ENCODE measurements at regions of chr15 and their contacts with region 1.

Region 1: DNA sequence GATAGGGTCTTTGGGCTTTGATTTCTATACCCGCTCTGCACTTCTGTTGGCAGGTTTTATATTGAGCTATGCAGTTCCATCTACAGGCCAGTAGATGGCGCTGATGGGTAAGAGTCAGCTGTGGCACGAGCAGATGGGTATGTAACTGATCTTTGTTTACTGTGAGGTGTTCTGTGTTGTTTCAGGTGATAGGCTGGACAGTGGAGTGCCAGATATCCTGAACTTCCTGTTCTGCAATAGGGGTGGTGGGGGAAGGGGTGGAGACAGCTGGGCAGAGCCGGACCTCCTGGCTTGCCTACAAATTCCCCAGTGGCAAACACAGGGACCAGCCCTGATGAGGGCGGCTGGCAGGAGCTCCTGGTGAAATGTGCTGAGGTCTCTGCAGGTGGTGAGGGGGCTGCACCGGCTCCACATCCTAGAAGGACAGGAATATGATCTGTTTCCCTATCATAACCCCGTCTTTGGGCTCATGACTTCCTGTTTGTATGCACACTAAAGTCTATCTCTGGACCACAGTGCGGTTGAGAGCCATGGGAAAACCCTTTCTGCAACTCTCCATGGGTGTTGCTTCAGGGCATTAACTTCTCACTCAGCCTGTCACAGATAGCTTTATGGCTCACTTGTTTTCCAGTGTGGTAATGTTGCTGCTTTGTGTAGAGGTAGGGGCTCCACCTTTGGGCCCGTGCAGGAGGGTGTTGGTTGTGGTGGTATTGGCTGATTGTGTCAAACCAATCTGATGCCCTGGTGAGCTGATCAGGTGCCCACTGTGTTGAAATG is 13.4 kb upstream of the FAM98B start:
- DNase-seq: peak; percentile 62
- ATAC-seq: peak; percentile 96
- H3K4me3 ChIP-seq: no peak overlapping the region
- H3K27ac ChIP-seq: no peak overlapping the region
- H3K4me1 ChIP-seq: no peaks in the 10 kb centered on the region
- H3K27me3 ChIP-seq: peaks cover 25% of the 10 kb centered on the region
- CTCF ChIP-seq: peak; percentile 89
- POLR2A ChIP-seq: no peak
- RAD21 ChIP-seq: peak; percentile 88

Region 2: GRCh38 chr15:38547255-38547997 is 106.9 kb after region 1 on chr15:
- CTCF ChIA-PET with region 1: interaction called, 3 read pairs
- POLR2A ChIA-PET with region 1: no interaction called
- dilution Hi-C with region 1: no loop called
- in situ Hi-C with region 1: no loop called
- intact Hi-C with region 1: loop called (anchors 1 kb)
- DNase-seq: peak; percentile 70
- ATAC-seq: no peak
- H3K4me3 ChIP-seq: no peak overlapping the region
- H3K27ac ChIP-seq: no peak overlapping the region
- H3K4me1 ChIP-seq: peaks cover 4% of the 10 kb centered on the region; the same call in 1 of the 2 replicates
- H3K27me3 ChIP-seq: no peaks in the 10 kb centered on the region
- CTCF ChIP-seq: no peak
- POLR2A ChIP-seq: no peak
- RAD21 ChIP-seq: no peak

Region 3: GRCh38 chr15:38631126-38632075 is 190.9 kb after region 1 on chr15:
- CTCF ChIA-PET with region 1: no interaction called
- POLR2A ChIA-PET with region 1: no interaction called
- dilution Hi-C with region 1: no loop called
- in situ Hi-C with region 1: no loop called
- intact Hi-C with region 1: no loop called
- DNase-seq: no peak
- ATAC-seq: no peak
- H3K4me3 ChIP-seq: no peak overlapping the region
- H3K27ac ChIP-seq: no peak overlapping the region
- H3K4me1 ChIP-seq: no peaks in the 10 kb centered on the region
- H3K27me3 ChIP-seq: peaks cover 58% of the 10 kb centered on the region
- CTCF ChIP-seq: no peak
- POLR2A ChIP-seq: no peak
- RAD21 ChIP-seq: no peak

Region 4: DNA sequence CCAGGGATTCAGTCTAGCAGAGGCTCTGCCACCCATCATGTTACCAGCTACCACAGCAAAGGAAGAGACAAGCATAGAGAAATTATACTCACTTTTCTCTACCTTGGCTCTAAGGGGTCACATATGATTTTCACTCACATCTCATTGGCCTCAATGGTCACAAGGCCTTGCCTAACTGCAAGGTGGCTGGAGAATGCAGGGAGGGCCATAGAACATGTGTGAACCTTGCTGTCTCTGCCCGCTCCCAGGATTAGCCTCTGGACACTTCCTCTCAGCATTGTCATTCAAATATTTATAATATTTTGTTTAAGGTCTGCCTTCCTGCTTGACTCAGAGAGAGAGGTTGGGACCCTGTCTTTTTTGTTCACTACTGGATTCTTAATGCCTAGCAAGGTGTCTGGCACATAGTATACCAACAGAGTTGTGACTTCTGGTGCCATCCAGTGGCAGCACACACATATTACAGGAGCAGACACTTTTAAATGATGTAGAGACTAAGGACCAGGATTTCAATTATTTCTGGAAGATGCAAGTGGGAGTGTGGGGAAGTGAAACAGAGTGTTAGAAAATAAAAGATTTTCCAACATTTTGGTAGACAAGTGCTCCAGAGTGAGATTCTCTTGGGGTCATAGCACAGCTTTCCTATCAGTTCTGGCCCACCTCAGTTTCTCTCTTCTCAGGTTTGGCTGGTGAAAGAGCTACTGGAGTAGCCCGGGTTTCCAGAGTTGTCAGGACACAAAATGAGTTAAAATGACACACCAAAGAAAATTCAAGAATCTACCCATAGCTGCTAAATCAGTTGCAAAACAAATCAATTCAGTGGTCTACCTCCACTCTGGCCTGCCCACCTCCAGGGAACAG is 243.1 kb after region 1 on chr15:
- CTCF ChIA-PET with region 1: interaction called, 25 read pairs
- POLR2A ChIA-PET with region 1: no interaction called
- dilution Hi-C with region 1: no loop called
- in situ Hi-C with region 1: loop called (anchors 25 kb)
- intact Hi-C with region 1: loop called (anchors 1 kb)
- DNase-seq: peak; percentile 53
- ATAC-seq: peak; percentile 94
- H3K4me3 ChIP-seq: no peak overlapping the region
- H3K27ac ChIP-seq: no peak overlapping the region
- H3K4me1 ChIP-seq: no peaks in the 10 kb centered on the region
- H3K27me3 ChIP-seq: peaks cover 20% of the 10 kb centered on the region
- CTCF ChIP-seq: peak; percentile 86
- POLR2A ChIP-seq: no peak
- RAD21 ChIP-seq: peak; percentile 85

Region 5: GRCh38 chr15:38690689-38691332 is 250.3 kb after region 1 on chr15:
- CTCF ChIA-PET with region 1: interaction called, 25 read pairs
- POLR2A ChIA-PET with region 1: no interaction called
- dilution Hi-C with region 1: no loop called
- in situ Hi-C with region 1: loop called (anchors 25 kb)
- intact Hi-C with region 1: no loop called
- DNase-seq: peak; percentile 75
- ATAC-seq: peak; percentile 64
- H3K4me3 ChIP-seq: no peak overlapping the region
- H3K27ac ChIP-seq: no peak overlapping the region
- H3K4me1 ChIP-seq: no peaks in the 10 kb centered on the region
- H3K27me3 ChIP-seq: peaks cover 2% of the 10 kb centered on the region; the same call in 1 of the 2 replicates
- CTCF ChIP-seq: peak; percentile 74
- POLR2A ChIP-seq: no peak
- RAD21 ChIP-seq: peak; percentile 63

Region 6: DNA sequence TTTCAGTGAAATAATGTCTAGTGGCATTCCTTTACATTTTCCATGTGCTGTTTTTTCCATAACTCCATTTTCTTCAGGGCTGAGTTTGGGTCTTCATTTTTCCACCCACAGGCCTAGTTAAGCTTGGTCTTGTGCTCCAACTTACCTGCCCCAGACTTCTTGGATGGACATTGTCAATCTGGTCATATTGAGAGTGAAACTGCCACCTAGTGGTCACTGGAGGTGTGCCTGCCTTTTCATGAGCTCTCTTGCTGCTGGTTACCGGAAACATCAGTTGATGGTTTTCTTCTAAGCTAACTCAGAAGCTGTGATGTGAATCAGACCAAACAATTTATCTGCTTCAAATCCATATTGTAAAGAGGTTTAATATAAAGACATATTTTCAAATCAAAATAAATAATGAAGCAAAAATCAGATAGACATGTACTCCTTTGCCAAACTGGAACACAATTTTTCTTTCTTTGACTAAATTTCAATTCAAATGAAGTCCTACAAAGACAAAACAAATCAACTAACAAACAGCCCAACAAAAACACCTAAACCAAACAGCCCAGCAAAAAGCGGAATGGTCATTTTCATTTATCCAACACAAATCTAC is 259.2 kb after region 1 on chr15:
- CTCF ChIA-PET with region 1: interaction called, 5 read pairs
- POLR2A ChIA-PET with region 1: no interaction called
- dilution Hi-C with region 1: no loop called
- in situ Hi-C with region 1: loop called (anchors 25 kb)
- intact Hi-C with region 1: no loop called
- DNase-seq: peak; percentile 65
- ATAC-seq: peak; percentile 38; the same call in 1 of the 2 replicates
- H3K4me3 ChIP-seq: no peak overlapping the region
- H3K27ac ChIP-seq: no peak overlapping the region
- H3K4me1 ChIP-seq: peaks cover 14% of the 10 kb centered on the region; the same call in 1 of the 2 replicates
- H3K27me3 ChIP-seq: no peaks in the 10 kb centered on the region
- CTCF ChIP-seq: peak; percentile 66
- POLR2A ChIP-seq: no peak
- RAD21 ChIP-seq: peak; percentile 52

Measured in IMR-90 (cell line).